Left cardiac atrium (tissue), 4 donors: ENCODE measurements at regions of chr6 and their contacts with region 1.

Region 1: DNA sequence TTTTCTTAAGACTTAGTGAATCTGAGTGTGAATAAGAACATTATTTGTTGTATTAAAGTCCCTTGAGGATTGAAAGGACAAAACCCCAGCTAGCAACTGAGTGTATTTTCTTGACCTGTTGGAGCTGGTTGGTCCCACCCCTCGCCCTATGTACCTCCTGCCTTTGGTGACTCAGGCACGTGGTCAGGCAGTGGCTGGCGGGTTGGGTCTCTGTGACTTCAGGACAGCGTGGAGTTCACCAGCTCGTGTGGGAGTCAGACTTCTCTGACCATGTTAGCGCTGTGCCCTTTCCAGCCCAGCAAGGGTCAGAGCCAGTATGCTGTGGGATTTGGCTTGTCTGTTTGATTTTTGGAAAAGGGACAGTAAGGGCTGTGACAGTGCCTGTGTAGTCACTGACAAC is 93.7 kb downstream of the SSR1 start:
- DNase-seq: peak; percentile 49
- ATAC-seq: peak; percentile 65

Region 2: GRCh38 chr6:6712258-6712999 is 506.9 kb before region 1 on chr6:
- intact Hi-C with region 1: no loop called
- DNase-seq: no peak
- ATAC-seq: peak; percentile 33 to 58

Region 3: DNA sequence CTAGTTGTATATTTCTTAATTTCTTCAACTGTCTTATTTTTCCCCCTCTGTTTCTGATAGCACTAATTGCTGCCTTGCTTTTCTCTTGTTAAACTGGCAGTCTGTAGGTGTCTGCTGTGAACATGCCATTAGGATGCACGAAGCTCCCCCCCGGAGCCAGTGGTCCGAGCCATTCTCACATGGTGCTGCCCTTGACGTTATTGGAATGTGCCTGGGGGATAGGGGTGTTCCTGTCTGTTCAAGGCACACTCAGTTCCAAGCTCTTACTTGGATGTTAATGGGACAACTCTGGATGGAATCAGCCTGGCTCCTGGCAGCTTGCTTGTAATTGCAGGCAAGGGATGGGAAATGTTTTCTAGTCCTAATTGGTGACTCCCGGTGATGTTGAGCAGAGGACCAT is 43.1 kb before region 1 on chr6:
- intact Hi-C with region 1: loop called in 1 of 2 experiments (anchors 5 kb)
- DNase-seq: no peak
- ATAC-seq: peak; percentile 20 to 39

Region 4: DNA sequence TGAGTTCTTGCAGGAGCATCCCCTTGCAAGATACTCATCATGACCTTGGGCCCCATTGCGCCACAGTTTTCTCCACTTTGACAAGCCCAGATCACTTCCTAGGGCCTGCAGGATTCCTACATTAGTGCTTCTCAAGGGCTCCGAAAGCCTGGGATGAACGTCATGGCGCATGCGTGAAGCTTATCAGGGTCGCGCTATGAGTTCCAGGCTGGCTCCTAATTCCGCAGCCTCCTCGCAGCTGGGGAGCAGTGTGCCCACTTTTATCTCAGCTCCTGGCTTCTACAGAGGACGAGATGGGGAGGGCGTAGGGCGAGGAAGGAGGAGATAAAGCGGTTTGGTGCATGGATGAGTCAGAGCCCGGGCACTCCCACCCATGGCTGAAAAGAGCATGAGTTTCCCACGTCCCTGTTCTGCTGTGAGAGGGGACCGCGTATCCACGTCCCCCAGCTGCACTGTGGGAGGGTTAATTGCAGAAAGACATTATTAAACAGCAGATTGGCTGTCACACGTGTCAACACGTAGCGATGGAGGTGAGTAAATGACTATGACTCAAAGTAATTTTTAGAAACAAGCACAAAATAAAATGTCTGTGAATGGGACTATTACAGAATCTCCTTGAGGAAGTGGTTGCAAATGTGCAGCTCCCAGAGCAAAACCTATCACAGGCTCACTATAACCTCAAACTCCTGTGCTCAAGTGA is 249.2 kb after region 1 on chr6:
- intact Hi-C with region 1: no loop called
- DNase-seq: peak; percentile 81
- ATAC-seq: peak; percentile 94 to 98